Panc1 (cell line): ENCODE measurements at regions of chr19 and their contacts with region 1.

Region 1: GRCh38 chr19:45455707-45456499 is 11.9 kb upstream of the FOSB start:
- DNase-seq: peak; percentile 92
- ATAC-seq: peak; percentile 94
- H3K4me3 ChIP-seq: peak overlapping the region; percentile 8 to 41; a peak in 3 of 4 replicates
- H3K27ac ChIP-seq: peak overlapping the region; percentile 56
- H3K4me1 ChIP-seq: peaks cover 11% of the 10 kb centered on the region
- H3K27me3 ChIP-seq: no peaks in the 10 kb centered on the region
- CTCF ChIP-seq: no peak

Region 2: GRCh38 chr19:44607049-44607448 is 848.9 kb before region 1 on chr19:
- CTCF ChIA-PET with region 1: no interaction called
- POLR2A ChIA-PET with region 1: no interaction called
- in situ Hi-C with region 1: no loop called
- intact Hi-C with region 1: no loop called
- DNase-seq: no peak
- ATAC-seq: no peak
- H3K4me3 ChIP-seq: no peak overlapping the region
- H3K27ac ChIP-seq: no peak overlapping the region
- H3K4me1 ChIP-seq: no peaks in the 10 kb centered on the region
- H3K27me3 ChIP-seq: no peaks in the 10 kb centered on the region
- CTCF ChIP-seq: no peak

Region 3: DNA sequence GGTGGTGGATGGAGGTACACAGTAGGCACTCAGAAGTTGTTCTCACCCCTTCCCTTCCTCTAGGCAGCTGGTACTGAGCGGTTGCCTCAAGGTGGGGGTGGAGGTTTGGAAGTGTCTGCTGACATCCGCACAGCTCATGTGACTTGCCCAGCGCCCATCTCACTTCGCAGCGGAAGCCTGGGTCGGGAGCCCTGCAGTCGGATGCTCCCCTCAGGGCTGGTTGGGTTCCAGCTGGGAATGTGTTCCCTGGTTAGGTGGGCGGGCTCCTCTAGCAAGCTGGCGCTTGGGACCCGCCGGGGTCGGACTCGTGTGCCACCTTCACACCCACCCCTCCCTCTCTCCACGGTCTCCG is 352.8 kb before region 1 on chr19:
- CTCF ChIA-PET with region 1: no interaction called
- POLR2A ChIA-PET with region 1: no interaction called
- in situ Hi-C with region 1: no loop called
- intact Hi-C with region 1: no loop called
- DNase-seq: no peak
- ATAC-seq: no peak
- H3K4me3 ChIP-seq: no peak overlapping the region
- H3K27ac ChIP-seq: no peak overlapping the region
- H3K4me1 ChIP-seq: peaks cover 21% of the 10 kb centered on the region
- H3K27me3 ChIP-seq: no peaks in the 10 kb centered on the region
- CTCF ChIP-seq: no peak

Region 4: DNA sequence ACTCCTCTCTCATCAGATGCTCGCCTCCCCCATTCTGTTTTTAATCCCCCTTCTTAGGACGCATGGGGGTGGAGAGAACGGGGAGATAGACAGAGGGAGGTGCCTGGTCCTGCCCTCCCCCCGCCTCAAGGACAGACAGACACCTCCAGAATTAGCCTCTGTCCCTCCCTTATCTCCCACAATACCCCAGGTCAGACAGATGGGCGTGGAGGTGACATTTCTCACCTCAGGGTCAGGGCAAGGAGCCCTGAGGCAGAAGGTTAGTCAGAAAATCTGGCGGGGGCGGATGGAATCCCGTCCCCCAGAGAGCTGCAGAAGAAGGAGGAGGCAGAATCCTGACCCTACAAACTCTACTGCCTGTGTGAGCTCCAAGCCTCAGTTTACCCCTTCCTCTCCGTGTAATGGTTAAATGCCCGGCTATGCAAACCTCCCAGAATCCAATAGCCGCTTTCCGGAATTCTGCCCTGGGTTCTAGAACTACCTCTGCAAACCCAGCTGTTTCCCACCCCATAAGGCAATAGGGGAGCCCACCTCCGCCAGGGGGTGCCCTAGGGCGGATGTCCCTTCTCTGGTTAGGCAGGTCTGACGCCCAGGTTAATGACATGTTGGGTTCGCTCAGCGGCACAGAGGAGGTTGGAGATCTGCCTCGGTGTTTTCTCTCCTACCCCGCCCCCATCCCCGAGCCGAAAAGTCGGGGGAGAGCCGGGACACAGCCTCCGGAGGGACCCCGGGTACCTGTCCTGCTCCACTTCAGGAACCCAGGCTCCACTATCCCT is 51.9 kb before region 1 on chr19:
- CTCF ChIA-PET with region 1: no interaction called
- POLR2A ChIA-PET with region 1: no interaction called
- in situ Hi-C with region 1: no loop called
- intact Hi-C with region 1: no loop called
- DNase-seq: no peak
- ATAC-seq: peak; percentile 35
- H3K4me3 ChIP-seq: peak overlapping the region; percentile 94 to 96
- H3K27ac ChIP-seq: peak overlapping the region; percentile 90
- H3K4me1 ChIP-seq: peaks cover 14% of the 10 kb centered on the region
- H3K27me3 ChIP-seq: no peaks in the 10 kb centered on the region
- CTCF ChIP-seq: peak; percentile 82

Region 5: GRCh38 chr19:45419396-45419795 is 36.5 kb before region 1 on chr19:
- CTCF ChIA-PET with region 1: interaction called, 11 read pairs
- POLR2A ChIA-PET with region 1: interaction called, 3 read pairs
- in situ Hi-C with region 1: no loop called
- intact Hi-C with region 1: no loop called
- DNase-seq: no peak
- ATAC-seq: no peak
- H3K4me3 ChIP-seq: no peak overlapping the region
- H3K27ac ChIP-seq: no peak overlapping the region
- H3K4me1 ChIP-seq: peaks cover 4% of the 10 kb centered on the region; the same call in 1 of the 2 replicates
- H3K27me3 ChIP-seq: no peaks in the 10 kb centered on the region
- CTCF ChIP-seq: no peak

Region 6: GRCh38 chr19:45558399-45558878 is 102.5 kb after region 1 on chr19:
- CTCF ChIA-PET with region 1: no interaction called
- POLR2A ChIA-PET with region 1: no interaction called
- in situ Hi-C with region 1: no loop called
- intact Hi-C with region 1: no loop called
- DNase-seq: no peak
- ATAC-seq: peak; percentile 74
- H3K4me3 ChIP-seq: no peak overlapping the region
- H3K27ac ChIP-seq: no peak overlapping the region
- H3K4me1 ChIP-seq: no peaks in the 10 kb centered on the region
- H3K27me3 ChIP-seq: no peaks in the 10 kb centered on the region
- CTCF ChIP-seq: peak; percentile 82

Region 7: DNA sequence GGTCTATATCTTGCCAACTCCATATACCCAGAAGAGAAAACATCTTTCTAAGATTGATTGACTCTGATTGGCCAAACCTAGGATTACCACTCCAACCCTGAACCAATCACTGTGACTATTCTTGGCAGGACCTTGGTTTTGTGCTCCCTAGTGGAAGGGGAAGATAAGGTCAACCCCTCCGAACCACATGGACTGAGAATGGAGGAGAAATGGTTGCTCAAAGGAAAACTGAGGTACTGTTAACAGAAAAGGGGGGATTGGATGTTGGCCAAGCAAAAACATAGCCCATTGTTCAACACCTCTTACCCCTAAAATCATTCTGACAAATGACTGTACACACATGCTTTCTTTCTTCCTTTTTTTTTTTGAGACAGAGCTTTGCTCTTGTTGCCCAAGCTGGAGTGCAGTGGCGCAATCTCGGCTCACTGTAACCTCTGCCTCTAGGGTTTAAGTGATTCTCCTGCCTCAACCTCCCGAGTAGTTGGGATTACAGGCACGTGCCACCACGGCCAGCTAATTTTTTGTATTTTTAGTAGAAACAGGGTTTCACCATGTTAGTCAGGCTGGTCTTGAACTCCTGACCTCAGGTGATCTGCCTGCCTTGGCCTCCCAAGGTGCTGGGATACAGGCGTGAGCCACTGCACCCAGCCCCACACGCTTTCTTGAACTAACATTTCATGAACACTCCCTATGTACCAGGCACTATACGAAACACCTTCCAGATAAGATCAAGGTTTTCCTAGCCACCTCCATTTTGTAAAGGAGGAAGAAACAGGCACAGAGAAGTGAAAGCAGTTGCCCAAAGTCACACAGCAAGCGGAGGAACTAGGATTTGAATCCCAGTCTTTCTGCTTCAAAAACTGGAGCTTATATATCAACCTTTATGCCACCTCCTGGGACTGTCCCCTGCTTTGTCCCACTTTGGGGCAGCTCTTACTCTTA is 283.9 kb after region 1 on chr19:
- CTCF ChIA-PET with region 1: no interaction called
- POLR2A ChIA-PET with region 1: interaction called, 11 read pairs
- in situ Hi-C with region 1: no loop called
- intact Hi-C with region 1: no loop called
- DNase-seq: no peak
- ATAC-seq: no peak
- H3K4me3 ChIP-seq: no peak overlapping the region
- H3K27ac ChIP-seq: no peak overlapping the region
- H3K4me1 ChIP-seq: no peaks in the 10 kb centered on the region
- H3K27me3 ChIP-seq: no peaks in the 10 kb centered on the region
- CTCF ChIP-seq: no peak